Activated CD4-positive, alpha-beta memory T cell treated with anti-CD3 and anti-CD28 coated beads for 36 hours (primary cell): ENCODE measurements at regions of chr7 and their contacts with region 1.

Region 1: GRCh38 chr7:774161-775109 is 47.4 kb upstream of the PRKAR1B start:
- DNase-seq: peak; percentile 76
- H3K4me3 Mint-ChIP-seq: no peak overlapping the region
- H3K27ac Mint-ChIP-seq: no peak overlapping the region
- H3K4me1 Mint-ChIP-seq: no peaks in the 10 kb centered on the region
- H3K27me3 Mint-ChIP-seq: no peaks in the 10 kb centered on the region

Region 2: GRCh38 chr7:322111-322671 is 452.2 kb before region 1 on chr7:
- CTCF ChIA-PET with region 1: interaction called, 21 read pairs
- POLR2A ChIA-PET with region 1: interaction called, 3 read pairs
- intact Hi-C with region 1: loop called (anchors 1 kb)
- DNase-seq: peak; percentile 86
- H3K4me3 Mint-ChIP-seq: no peak overlapping the region
- H3K27ac Mint-ChIP-seq: no peak overlapping the region
- H3K4me1 Mint-ChIP-seq: no peaks in the 10 kb centered on the region
- H3K27me3 Mint-ChIP-seq: peaks cover 34% of the 10 kb centered on the region

Region 3: DNA sequence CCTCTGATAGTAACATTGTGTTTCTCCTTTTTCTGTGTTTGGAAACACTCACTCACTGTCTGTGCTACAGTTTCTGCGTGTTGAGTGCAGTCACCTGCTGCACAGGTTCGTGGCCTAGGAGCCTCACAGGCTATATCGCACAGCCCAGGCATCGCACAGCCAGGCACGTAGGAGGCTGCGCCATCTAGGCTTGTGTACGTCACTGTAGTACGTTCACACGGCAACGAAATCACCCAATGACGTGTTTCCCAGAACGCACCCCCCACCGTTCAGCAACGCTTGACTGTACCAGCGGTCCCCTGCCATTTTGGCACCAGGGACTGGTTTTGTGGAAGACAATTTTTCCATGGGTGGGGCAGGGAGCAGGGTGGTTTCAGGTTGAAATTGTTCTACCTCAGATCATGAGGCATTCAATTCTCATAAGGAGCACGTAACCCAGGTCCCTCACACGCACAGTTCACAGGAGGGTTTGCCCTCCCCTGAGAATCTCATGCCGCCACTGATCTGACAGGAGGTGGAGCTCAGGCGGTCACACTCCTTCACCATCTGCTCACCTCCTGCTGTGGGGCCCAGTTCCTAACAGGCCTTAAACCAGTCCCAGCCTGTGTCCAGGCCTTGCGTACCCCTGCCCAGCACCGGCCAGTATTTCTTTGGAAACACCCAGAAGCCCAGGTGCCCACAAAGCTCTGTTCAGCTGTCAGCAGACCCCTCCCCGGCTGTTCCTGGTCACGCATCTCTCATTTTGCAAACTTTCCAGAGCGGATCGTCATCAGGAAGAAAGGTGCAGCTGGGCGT is 24.1 kb before region 1 on chr7:
- CTCF ChIA-PET with region 1: no interaction called
- POLR2A ChIA-PET with region 1: no interaction called
- intact Hi-C with region 1: no loop called
- DNase-seq: no peak
- H3K4me3 Mint-ChIP-seq: no peak overlapping the region
- H3K27ac Mint-ChIP-seq: no peak overlapping the region
- H3K4me1 Mint-ChIP-seq: no peaks in the 10 kb centered on the region
- H3K27me3 Mint-ChIP-seq: no peaks in the 10 kb centered on the region